ENCODE measurements at regions of chr3 and their contacts with region 1.

Region 1: GRCh38 chr3:45499529-45499928 is 95.0 kb upstream of the LIMD1 start:
- DNase-seq: peak; percentile 19 to 34
- ATAC-seq: no peak
- H3K4me3 ChIP-seq: no peak overlapping the region
- H3K27ac ChIP-seq: no peak overlapping the region
- H3K4me1 ChIP-seq: no peaks in the 10 kb centered on the region
- CTCF ChIP-seq: peak; percentile 61
- EP300 ChIP-seq: no peak
- POLR2A ChIP-seq: no peak
- RAD21 ChIP-seq: peak; percentile 64 to 76

Region 2: GRCh38 chr3:45037734-45038455 is 461.6 kb before region 1 on chr3:
- CTCF ChIA-PET with region 1: interaction called, 45 read pairs
- POLR2A ChIA-PET with region 1: no interaction called
- DNase-seq: peak; percentile 87 to 90
- ATAC-seq: peak; percentile 90 to 95
- H3K4me3 ChIP-seq: no peak overlapping the region
- H3K27ac ChIP-seq: no peak overlapping the region
- H3K4me1 ChIP-seq: peaks cover 9% of the 10 kb centered on the region; the same call in 1 of the 3 replicates
- CTCF ChIP-seq: peak; percentile 94
- EP300 ChIP-seq: no peak
- POLR2A ChIP-seq: no peak
- RAD21 ChIP-seq: peak; percentile 91 to 94

Region 3: DNA sequence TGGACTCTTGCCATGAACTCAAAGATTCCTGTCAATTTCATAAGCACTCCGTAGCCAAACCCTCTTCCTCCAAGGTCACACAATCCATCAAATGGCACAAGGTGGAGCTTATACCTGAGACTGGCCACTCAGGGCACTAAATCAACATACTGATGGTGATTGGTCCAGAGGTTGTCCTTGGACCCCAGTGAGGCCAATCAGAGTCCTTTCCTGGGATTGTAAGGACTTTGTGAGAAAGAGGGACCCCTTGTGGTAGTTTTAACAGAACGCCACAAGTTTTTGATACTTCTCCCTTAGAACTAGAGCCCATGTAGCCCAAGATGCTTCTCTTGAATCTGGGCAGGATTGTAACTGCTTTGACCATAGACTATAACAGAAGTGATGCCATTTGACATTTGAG is 155.6 kb before region 1 on chr3:
- CTCF ChIA-PET with region 1: no interaction called
- POLR2A ChIA-PET with region 1: no interaction called
- DNase-seq: peak; percentile 5 to 47
- ATAC-seq: peak in 1 of 2 experiments; percentile 61; a peak in 3 of 6 replicates
- H3K4me3 ChIP-seq: no peak overlapping the region
- H3K27ac ChIP-seq: no peak overlapping the region
- H3K4me1 ChIP-seq: no peaks in the 10 kb centered on the region
- CTCF ChIP-seq: no peak
- EP300 ChIP-seq: no peak
- POLR2A ChIP-seq: no peak
- RAD21 ChIP-seq: no peak

Region 4: GRCh38 chr3:45593708-45594609 is 94.4 kb after region 1 on chr3:
- CTCF ChIA-PET with region 1: no interaction called
- POLR2A ChIA-PET with region 1: no interaction called
- DNase-seq: peak; percentile 56 to 80
- ATAC-seq: peak; percentile 84 to 86
- H3K4me3 ChIP-seq: peak overlapping the region; percentile 63
- H3K27ac ChIP-seq: peak overlapping the region; percentile 89 to 94
- H3K4me1 ChIP-seq: peaks cover 32% of the 10 kb centered on the region
- CTCF ChIP-seq: no peak
- EP300 ChIP-seq: no peak
- POLR2A ChIP-seq: peak; percentile 48
- RAD21 ChIP-seq: no peak